GM12878 (cell line): ENCODE measurements at regions of chr6 and their contacts with region 1.

Region 1: GRCh38 chr6:137903933-137904821 is 37.1 kb downstream of the TNFAIP3 start:
- DNase-seq: no peak
- ATAC-seq: peak; percentile 79
- H3K4me3 ChIP-seq: peak overlapping the region; percentile 54; the same call in 1 of the 2 replicates
- H3K27ac ChIP-seq: peak overlapping the region; percentile 95
- H3K4me1 ChIP-seq: peaks cover 23% of the 10 kb centered on the region
- H3K27me3 ChIP-seq: no peaks in the 10 kb centered on the region
- CTCF ChIP-seq: no peak
- EP300 ChIP-seq: peak; percentile 69 to 72; a peak in 2 of 4 replicates
- POLR2A ChIP-seq: peak; percentile 41
- RAD21 ChIP-seq: peak; percentile 22; the same call in 1 of the 2 replicates

Region 2: GRCh38 chr6:137736048-137736818 is 167.9 kb before region 1 on chr6:
- CTCF ChIA-PET with region 1: no interaction called
- POLR2A ChIA-PET with region 1: no interaction called
- RAD21 ChIA-PET with region 1: no interaction called
- SMC1A ChIA-PET with region 1: no interaction called
- in situ Hi-C with region 1: no loop called
- intact Hi-C with region 1: no loop called
- DNase-seq: no peak
- ATAC-seq: peak; percentile 67
- H3K4me3 ChIP-seq: no peak overlapping the region
- H3K27ac ChIP-seq: no peak overlapping the region
- H3K4me1 ChIP-seq: peaks cover 12% of the 10 kb centered on the region
- H3K27me3 ChIP-seq: no peaks in the 10 kb centered on the region
- CTCF ChIP-seq: no peak
- EP300 ChIP-seq: no peak; a peak in 1 of 4 replicates
- POLR2A ChIP-seq: peak; percentile 35; the same call in 1 of the 2 replicates
- RAD21 ChIP-seq: no peak

Region 3: DNA sequence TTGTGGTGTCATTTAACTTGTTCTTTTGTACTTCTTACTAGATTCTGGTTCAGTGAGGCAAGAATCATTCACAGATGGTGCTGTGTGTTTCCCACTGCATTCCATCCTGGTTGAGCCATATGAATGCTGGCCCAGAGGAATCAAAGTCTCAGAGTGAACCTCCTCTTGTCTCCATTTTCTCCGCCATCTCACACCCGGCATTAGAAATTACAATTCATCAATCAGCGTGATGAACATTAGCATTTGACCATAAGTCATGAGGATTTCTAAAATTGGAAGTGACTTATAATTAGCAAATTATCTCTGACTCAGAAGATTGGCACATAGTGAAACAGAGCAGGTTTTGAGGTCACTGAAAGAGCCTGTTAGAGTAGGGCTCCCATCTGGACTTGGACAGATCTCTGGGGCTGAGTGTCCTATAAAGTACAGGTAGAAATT is 11.9 kb before region 1 on chr6:
- CTCF ChIA-PET with region 1: interaction called, 5 read pairs
- POLR2A ChIA-PET with region 1: interaction called, 5 read pairs
- RAD21 ChIA-PET with region 1: interaction called, 6 read pairs
- SMC1A ChIA-PET with region 1: interaction called, 10 read pairs
- in situ Hi-C with region 1: no loop called
- intact Hi-C with region 1: no loop called
- DNase-seq: no peak
- ATAC-seq: peak; percentile 91
- H3K4me3 ChIP-seq: no peak overlapping the region
- H3K27ac ChIP-seq: no peak overlapping the region
- H3K4me1 ChIP-seq: no peaks in the 10 kb centered on the region
- H3K27me3 ChIP-seq: no peaks in the 10 kb centered on the region
- CTCF ChIP-seq: no peak
- EP300 ChIP-seq: no peak
- POLR2A ChIP-seq: no peak
- RAD21 ChIP-seq: no peak

Region 4: GRCh38 chr6:137927777-137928218 is 23.6 kb after region 1 on chr6:
- CTCF ChIA-PET with region 1: interaction called, 60 read pairs
- POLR2A ChIA-PET with region 1: interaction called, 153 read pairs
- RAD21 ChIA-PET with region 1: interaction called, 35 read pairs
- SMC1A ChIA-PET with region 1: interaction called, 126 read pairs
- in situ Hi-C with region 1: no loop called
- intact Hi-C with region 1: loop called (anchors 1 kb)
- DNase-seq: peak; percentile 99
- ATAC-seq: peak; percentile 93
- H3K4me3 ChIP-seq: peak overlapping the region; percentile 19; the same call in 1 of the 2 replicates
- H3K27ac ChIP-seq: peak overlapping the region; percentile 98
- H3K4me1 ChIP-seq: peaks cover 61% of the 10 kb centered on the region
- H3K27me3 ChIP-seq: no peaks in the 10 kb centered on the region
- CTCF ChIP-seq: no peak
- EP300 ChIP-seq: peak; percentile 91; a peak in 3 of 4 replicates
- POLR2A ChIP-seq: peak; percentile 69; the same call in 1 of the 2 replicates
- RAD21 ChIP-seq: 0 out of 2 replicates have a peak, but pooled peaks have one; percentile 4

Region 5: GRCh38 chr6:138129190-138129589 is 225.0 kb after region 1 on chr6:
- CTCF ChIA-PET with region 1: no interaction called
- POLR2A ChIA-PET with region 1: no interaction called
- RAD21 ChIA-PET with region 1: no interaction called
- SMC1A ChIA-PET with region 1: no interaction called
- in situ Hi-C with region 1: no loop called
- intact Hi-C with region 1: no loop called
- DNase-seq: no peak
- ATAC-seq: peak; percentile 28; the same call in 1 of the 3 replicates
- H3K4me3 ChIP-seq: no peak overlapping the region
- H3K27ac ChIP-seq: no peak overlapping the region
- H3K4me1 ChIP-seq: no peaks in the 10 kb centered on the region
- H3K27me3 ChIP-seq: no peaks in the 10 kb centered on the region; a peak in 1 of 4 replicates
- CTCF ChIP-seq: 0 out of 6 replicates have a peak, but pooled peaks of 1 of the 3 experiments have one; percentile 4
- EP300 ChIP-seq: no peak
- POLR2A ChIP-seq: no peak
- RAD21 ChIP-seq: no peak